ENCODE measurements at regions of chr1 and their contacts with region 1.

Region 1: DNA sequence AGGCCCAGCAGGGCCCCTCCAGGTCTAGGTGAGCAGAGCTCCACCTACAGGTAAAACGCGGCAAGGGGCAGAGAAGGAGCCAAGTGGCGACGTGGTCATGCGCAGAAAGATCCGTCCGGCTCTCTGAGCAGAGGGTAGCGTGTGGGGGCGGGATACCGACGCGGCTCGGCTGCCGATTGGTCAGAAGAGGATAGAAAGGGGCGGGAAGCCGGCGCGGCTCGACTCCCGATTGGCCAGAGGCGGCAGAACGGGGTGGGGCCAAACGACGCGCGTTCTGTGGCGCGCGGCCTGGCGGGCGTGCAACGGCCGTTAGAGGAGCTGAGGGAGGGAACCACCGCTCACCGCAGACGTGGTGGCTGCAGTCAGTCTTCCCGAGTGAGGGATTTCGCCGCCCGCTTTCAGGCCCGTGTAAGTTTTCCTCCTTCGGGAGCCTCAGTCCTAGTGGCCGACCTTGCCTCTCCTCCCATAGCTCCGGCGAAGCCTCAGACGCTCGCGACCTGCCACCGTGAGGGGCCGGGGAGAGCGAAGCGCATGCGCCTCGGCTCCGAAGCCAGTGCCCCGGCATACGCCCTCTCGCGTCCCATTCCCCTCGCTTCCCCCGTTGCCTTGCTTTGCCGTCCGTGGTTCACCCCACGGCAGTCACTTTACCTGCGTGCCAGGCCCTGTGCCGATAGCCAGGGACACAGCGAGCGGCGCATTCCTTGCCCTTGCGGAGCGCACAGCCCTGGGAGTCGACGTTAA is at the start of gene CEP85:
- H3K4me3 ChIP-seq: peak within 1 kb of the TSS; percentile 60
- H3K27ac ChIP-seq: peak within 1 kb of the TSS; percentile 61
- H3K4me1 ChIP-seq: no peaks in the 10 kb centered on the region
- CTCF ChIP-seq: peak; percentile 96

Region 2: DNA sequence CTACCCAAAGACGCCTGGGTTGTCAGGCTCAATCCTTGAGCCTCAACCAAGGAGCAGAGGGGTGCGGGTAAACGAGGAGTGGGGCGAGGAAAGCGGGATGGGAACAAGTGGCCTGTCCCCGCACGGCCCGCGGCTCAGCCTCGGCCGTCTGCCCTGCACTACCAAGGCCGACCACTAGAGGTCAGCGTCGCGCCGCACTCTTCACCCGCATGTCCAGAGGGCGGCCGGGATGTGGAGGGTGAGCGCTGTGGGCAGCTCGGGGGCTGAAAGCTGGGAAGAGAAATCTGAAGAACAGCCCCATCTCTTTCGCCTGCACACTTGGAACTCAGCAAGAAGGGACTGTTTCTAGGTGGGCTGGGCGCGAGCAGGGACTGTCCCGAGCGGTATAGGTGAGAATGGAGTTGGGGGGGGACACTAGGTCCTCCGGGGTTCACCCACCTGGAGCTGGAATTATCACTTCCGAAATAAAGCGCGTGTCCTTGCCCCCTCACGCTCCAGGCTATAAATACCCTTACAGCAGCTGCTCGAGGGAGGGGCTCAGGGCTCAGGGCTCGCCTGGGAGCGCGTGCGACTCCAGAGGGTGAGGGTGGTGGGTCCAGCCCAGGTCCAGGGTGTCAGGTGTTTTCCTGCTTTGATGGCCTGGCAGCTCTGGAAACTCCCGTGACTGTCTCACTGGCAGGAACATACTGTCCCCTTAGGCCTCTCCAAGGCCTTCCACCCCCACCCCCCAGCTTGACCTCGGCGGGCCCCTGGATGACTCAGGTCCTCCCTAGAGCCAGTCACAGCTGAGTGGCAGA is 197.9 kb before region 1 on chr1:
- CTCF ChIA-PET with region 1: interaction called, 17 read pairs
- POLR2A ChIA-PET with region 1: no interaction called
- H3K4me3 ChIP-seq: peak overlapping the region; percentile 83
- H3K27ac ChIP-seq: peak overlapping the region; percentile 56; the same call in 1 of the 2 replicates
- H3K4me1 ChIP-seq: no peaks in the 10 kb centered on the region
- CTCF ChIP-seq: peak; percentile 98

Region 3: GRCh38 chr1:26072305-26072704 is 161.8 kb before region 1 on chr1:
- CTCF ChIA-PET with region 1: no interaction called
- POLR2A ChIA-PET with region 1: no interaction called
- H3K4me3 ChIP-seq: no peak overlapping the region
- H3K27ac ChIP-seq: no peak overlapping the region
- H3K4me1 ChIP-seq: no peaks in the 10 kb centered on the region
- CTCF ChIP-seq: no peak

Region 4: DNA sequence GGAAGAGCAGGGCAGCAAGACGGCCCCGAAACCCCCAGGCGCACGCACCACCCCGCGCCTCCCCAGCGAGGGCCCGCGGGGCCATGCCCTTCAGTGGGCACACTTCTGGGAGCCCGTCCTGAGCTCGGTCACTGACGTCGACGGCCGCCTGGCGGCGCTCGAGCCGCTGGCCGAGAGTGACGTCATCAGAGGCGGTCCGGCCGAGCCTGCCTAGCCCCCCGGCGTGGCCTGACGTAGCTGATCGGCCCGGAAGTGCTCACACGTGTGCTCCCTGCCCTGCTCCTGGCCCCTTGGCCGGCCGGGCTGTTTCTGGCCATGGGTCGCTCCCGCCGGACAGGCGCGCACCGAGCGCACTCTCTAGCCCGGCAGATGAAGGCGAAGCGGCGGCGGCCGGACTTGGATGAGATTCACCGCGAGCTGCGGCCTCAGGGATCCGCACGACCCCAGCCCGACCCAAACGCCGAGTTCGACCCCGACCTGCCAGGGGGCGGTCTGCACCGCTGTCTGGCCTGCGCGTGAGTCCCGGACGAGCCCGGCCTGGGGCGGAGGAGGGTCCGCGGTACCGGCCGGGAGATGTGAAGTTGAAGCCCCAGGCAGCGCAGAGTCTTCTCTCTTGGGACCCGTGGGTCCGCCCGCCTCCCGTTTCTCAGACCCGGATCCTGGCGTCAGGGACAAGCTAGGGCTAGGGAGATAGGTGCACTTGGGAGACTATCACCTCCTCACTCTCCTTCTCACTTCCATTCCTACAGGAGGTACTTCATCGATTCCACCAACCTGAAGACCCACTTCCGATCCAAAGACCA is 64.2 kb before region 1 on chr1 and contains the start of gene ZNF593:
- CTCF ChIA-PET with region 1: interaction called, 14 read pairs
- POLR2A ChIA-PET with region 1: interaction called, 23 read pairs
- H3K4me3 ChIP-seq: peak within 1 kb of the TSS; percentile 68
- H3K27ac ChIP-seq: peak within 1 kb of the TSS; percentile 59; the same call in 1 of the 2 replicates
- H3K4me1 ChIP-seq: peaks cover 7% of the 10 kb centered on the region; the same call in 1 of the 2 replicates
- CTCF ChIP-seq: peak; percentile 98

Region 5: DNA sequence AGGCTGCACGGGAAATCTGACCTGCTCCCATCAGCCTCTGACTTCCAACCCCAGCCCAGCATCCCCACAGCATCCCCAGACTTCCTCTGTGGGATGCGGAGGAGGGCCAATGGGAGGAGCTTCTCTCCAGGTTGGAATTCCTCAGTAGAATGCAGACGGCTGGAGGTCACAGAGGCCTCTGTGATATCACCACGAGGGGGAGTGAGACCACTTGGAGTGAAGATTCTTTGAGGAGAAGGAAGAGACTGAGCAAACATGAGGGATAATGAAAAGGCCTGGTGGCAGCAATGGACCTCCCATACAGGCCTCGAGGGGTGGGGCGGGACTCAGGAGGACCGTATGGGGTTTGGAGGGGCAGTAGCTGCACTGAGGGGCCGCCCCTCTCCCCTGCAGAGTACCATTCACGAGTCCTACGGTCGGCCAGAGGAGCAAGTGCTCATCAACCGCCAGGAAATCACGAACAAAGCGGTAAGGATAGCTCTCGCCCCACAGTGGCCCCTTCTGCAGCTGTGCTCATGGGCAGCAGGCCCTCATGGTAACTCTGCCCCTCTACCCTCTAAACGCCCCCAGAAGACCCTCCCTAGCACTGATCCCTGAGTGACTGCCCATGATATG is 43.6 kb before region 1 on chr1 and contains the start of gene CATSPER4:
- CTCF ChIA-PET with region 1: interaction called, 32 read pairs
- POLR2A ChIA-PET with region 1: interaction called, 16 read pairs
- H3K4me3 ChIP-seq: no peak within 1 kb of the TSS
- H3K27ac ChIP-seq: no peak within 1 kb of the TSS
- H3K4me1 ChIP-seq: no peaks in the 10 kb centered on the region
- CTCF ChIP-seq: peak; percentile 46; the same call in 1 of the 2 replicates

Region 6: GRCh38 chr1:26203642-26204318 is 30.3 kb before region 1 on chr1:
- CTCF ChIA-PET with region 1: interaction called, 14 read pairs
- POLR2A ChIA-PET with region 1: no interaction called
- H3K4me3 ChIP-seq: no peak overlapping the region
- H3K27ac ChIP-seq: no peak overlapping the region
- H3K4me1 ChIP-seq: no peaks in the 10 kb centered on the region
- CTCF ChIP-seq: no peak

Region 7: DNA sequence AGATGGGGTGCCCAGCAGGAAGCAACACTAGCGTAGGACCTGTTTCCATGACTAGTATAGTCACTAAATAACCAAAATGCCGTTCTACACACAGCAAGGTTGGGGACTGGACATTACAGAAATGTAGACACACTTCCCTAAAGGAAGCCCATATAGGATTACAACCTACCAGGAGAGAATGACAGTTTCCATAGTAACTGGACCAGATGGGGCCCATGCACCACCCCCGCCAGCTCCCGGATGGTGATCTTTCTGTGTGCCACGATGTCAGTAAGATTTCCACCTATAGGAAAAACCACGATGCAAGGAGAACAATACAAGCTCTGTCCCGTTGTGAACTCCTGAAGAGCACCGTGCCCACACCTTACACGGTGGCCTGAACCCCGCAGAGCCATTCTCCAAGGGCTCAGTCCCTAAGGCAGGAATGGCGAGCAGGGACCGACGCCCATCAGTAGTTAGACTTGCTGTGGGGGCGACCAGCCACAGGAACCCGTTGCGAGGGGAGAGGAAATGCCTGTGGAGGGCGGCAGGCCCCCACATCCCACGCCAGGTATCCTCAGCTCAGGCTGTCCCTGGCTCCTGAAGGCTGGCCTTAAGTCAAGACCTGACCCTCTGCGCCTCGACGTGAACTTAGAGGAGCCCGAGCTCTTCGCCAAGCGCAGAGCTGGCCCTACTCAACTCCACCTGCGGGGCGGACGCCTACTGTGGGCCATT is 13.7 kb before region 1 on chr1:
- CTCF ChIA-PET with region 1: interaction called, 27 read pairs
- POLR2A ChIA-PET with region 1: interaction called, 6 read pairs
- H3K4me3 ChIP-seq: no peak overlapping the region
- H3K27ac ChIP-seq: no peak overlapping the region
- H3K4me1 ChIP-seq: peaks cover 3% of the 10 kb centered on the region; the same call in 1 of the 2 replicates
- CTCF ChIP-seq: no peak